Activated B cell treated with CpG ODN at 0.5 μM for 24 hours (primary cell): ENCODE measurements at regions of chr14 and their contacts with region 1.

Region 1: DNA sequence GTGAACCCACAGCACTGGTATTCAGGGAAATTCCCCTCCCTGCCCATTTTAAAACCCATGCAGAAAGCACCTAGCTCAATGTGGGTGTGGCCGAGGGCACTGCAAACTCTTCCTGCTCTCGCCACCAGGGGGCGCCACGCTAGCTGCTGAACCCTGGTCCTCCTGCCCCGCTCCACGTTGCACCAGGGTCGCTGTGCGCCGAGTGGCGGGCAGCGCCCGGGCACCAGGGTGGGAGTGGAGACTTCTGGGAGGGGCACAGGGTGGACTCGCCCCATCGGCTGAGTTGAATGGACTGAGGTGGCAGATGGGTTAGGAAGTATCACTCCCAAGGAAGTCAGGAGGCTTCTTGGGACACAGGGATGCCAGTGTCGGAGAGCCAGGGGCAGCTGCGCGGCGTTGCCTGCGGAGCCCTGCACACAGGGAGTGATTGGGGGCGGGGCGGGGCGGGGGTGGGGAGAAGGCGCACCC is 48.1 kb upstream of the BCL11B start:
- DNase-seq: peak; percentile 38
- ATAC-seq: peak; percentile 60
- H3K4me3 Mint-ChIP-seq: no peak overlapping the region
- H3K27ac Mint-ChIP-seq: no peak overlapping the region
- H3K4me1 Mint-ChIP-seq: no peaks in the 10 kb centered on the region
- H3K27me3 Mint-ChIP-seq: no peaks in the 10 kb centered on the region
- CTCF ChIP-seq: no peak

Region 2: GRCh38 chr14:99038431-99038820 is 281.7 kb before region 1 on chr14:
- CTCF ChIA-PET with region 1: no interaction called
- POLR2A ChIA-PET with region 1: no interaction called
- intact Hi-C with region 1: no loop called
- DNase-seq: no peak
- ATAC-seq: no peak
- H3K4me3 Mint-ChIP-seq: no peak overlapping the region
- H3K27ac Mint-ChIP-seq: no peak overlapping the region
- H3K4me1 Mint-ChIP-seq: no peaks in the 10 kb centered on the region
- H3K27me3 Mint-ChIP-seq: no peaks in the 10 kb centered on the region
- CTCF ChIP-seq: no peak

Region 3: GRCh38 chr14:99143793-99144192 is 176.3 kb before region 1 on chr14:
- CTCF ChIA-PET with region 1: no interaction called
- POLR2A ChIA-PET with region 1: no interaction called
- intact Hi-C with region 1: no loop called
- DNase-seq: no peak
- ATAC-seq: no peak
- H3K4me3 Mint-ChIP-seq: no peak overlapping the region
- H3K27ac Mint-ChIP-seq: no peak overlapping the region
- H3K4me1 Mint-ChIP-seq: no peaks in the 10 kb centered on the region
- H3K27me3 Mint-ChIP-seq: no peaks in the 10 kb centered on the region
- CTCF ChIP-seq: no peak

Region 4: GRCh38 chr14:99415496-99416281 is 95.5 kb after region 1 on chr14:
- CTCF ChIA-PET with region 1: interaction called, 12 read pairs
- POLR2A ChIA-PET with region 1: no interaction called
- intact Hi-C with region 1: loop called (anchors 1 kb)
- DNase-seq: no peak
- ATAC-seq: peak; percentile 75
- H3K4me3 Mint-ChIP-seq: no peak overlapping the region
- H3K27ac Mint-ChIP-seq: no peak overlapping the region
- H3K4me1 Mint-ChIP-seq: peaks cover 6% of the 10 kb centered on the region
- H3K27me3 Mint-ChIP-seq: no peaks in the 10 kb centered on the region
- CTCF ChIP-seq: no peak

Region 5: DNA sequence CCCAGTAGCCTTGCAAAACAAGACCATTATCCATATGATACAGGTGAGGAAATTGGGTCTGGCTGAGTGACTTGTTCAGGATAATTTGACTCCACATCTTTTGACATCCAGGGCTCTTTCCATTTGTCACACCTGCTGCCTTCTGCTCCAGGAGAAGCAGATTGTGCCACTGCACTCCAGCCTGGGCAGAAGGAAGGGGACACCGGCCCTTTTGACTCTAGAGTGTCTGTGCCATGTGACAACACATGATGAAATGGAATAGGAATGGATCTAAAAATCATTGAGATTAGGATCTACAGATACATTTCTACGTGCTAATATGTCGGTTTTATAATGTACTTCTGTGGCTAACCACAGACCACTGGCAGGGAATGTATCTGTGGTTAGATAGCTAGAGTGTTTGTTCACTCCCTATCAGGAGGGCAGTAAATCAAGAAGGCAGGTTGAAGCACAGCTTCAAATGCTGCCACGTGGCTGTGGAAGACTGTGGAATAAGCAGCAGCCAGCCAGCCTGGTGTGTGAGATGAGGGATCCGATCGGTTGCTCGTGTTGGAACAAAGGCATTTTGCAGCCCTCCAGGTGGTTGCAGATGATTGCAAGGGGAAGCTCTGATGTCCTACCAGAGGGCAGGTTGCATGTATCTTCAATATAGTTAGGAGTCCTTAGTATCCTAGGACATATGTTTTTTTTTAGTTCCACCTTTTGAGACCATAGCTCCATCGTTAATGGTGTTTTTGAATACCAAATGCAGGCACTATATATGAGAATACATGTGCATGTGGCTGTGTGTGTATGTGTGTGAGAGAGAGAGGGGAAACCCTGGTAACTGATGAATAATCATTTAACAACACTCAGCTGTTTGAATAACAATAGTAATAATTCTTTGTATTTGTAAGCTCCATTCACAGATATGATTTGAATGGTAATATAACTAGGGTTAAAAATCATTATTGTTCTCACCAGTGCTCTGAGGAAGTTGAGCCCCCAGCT is 501.7 kb after region 1 on chr14:
- CTCF ChIA-PET with region 1: no interaction called
- POLR2A ChIA-PET with region 1: no interaction called
- intact Hi-C with region 1: no loop called
- DNase-seq: no peak
- ATAC-seq: no peak
- H3K4me3 Mint-ChIP-seq: no peak overlapping the region
- H3K27ac Mint-ChIP-seq: no peak overlapping the region
- H3K4me1 Mint-ChIP-seq: no peaks in the 10 kb centered on the region
- H3K27me3 Mint-ChIP-seq: peaks cover 31% of the 10 kb centered on the region
- CTCF ChIP-seq: no peak